H1 (cell line): ENCODE measurements at regions of chr19 and their contacts with region 1.

Region 1: DNA sequence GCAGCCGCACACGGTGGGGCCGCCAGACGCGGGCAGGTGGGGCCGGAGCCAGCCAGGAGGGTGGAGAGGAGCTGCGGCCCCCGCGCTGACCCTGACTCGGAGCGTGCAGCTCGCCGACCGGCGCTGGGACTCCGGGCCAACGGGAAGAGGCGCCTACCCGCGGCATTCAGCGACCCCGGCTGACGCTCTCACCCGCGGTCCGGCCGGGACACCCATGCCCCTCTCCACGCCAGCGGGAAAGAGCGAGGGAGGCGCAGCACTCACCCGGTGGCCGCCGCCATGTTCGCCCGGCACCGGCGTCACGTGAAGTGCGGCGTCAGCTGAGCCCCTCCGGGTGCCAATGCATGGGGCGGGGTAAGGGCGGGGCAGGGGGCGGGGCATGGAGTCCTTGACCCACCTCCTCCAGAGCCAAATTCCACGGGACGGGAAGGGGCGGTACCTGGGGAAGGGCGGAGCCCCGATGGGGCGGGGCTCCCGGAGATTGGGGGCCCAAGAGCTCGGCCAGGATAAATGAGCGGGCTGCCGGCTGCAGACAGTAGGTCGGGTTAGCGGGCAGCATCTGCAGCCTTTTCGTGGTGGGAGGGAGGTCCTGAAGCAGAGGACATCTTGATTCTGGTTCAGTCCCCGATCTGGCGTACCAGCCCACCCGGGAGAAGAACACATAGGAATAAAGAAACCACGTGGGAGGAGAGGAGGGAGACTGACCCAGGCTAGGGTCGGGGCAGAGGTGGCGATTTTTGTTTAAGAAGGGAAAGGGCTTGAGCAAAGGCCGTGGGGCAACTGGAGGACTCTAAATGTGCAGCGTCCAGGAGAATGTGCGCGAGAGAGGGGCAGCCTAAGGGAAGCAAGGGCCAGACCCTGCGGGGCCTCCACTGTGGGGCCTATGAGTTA is at the start of gene PEPD:
- DNase-seq: peak; percentile 85 to 95
- H3K4me3 ChIP-seq: peak within 1 kb of the TSS; percentile 81 to 94 (median 92)
- H3K27ac ChIP-seq: peak within 1 kb of the TSS; percentile 71; the same call in 1 of the 2 replicates
- H3K4me1 ChIP-seq: peaks cover 0 to 19% (median 5%) of the 10 kb centered on the region in 4 experiments; a peak in 5 of 7 replicates
- H3K27me3 ChIP-seq: no peaks in the 10 kb centered on the region
- CTCF ChIP-seq: no peak
- EP300 ChIP-seq: peak in 1 of 2 experiments; percentile 52; a peak in 1 of 3 replicates
- POLR2A ChIP-seq: peak in 1 of 2 experiments; percentile 76; a peak in 1 of 3 replicates
- RAD21 ChIP-seq: peak; percentile 12 to 16; a peak in 1 of 4 replicates
- total RNA-seq, gene PEPD: 84.1 and 86.4 TPM in 2 replicates

Region 2: GRCh38 chr19:33510795-33511194 is 10.9 kb before region 1 on chr19:
- CTCF ChIA-PET with region 1: interaction called, 4 read pairs
- POLR2A ChIA-PET with region 1: interaction called, 14 read pairs
- DNase-seq: no peak
- H3K4me3 ChIP-seq: no peak overlapping the region
- H3K27ac ChIP-seq: peak overlapping the region; percentile 49; the same call in 1 of the 2 replicates
- H3K4me1 ChIP-seq: peaks cover 0 to 15% (median 7%) of the 10 kb centered on the region in 4 experiments; a peak in 6 of 7 replicates
- H3K27me3 ChIP-seq: no peaks in the 10 kb centered on the region; a peak in 1 of 7 replicates
- CTCF ChIP-seq: no peak
- EP300 ChIP-seq: no peak
- POLR2A ChIP-seq: no peak
- RAD21 ChIP-seq: no peak

Region 3: GRCh38 chr19:33535226-33535625 is 13.5 kb after region 1 on chr19:
- CTCF ChIA-PET with region 1: interaction called, 7 read pairs
- POLR2A ChIA-PET with region 1: interaction called, 26 read pairs
- DNase-seq: no peak
- H3K4me3 ChIP-seq: no peak overlapping the region
- H3K27ac ChIP-seq: no peak overlapping the region
- H3K4me1 ChIP-seq: peaks cover 0 to 15% (median 7%) of the 10 kb centered on the region in 4 experiments; a peak in 5 of 7 replicates
- H3K27me3 ChIP-seq: no peaks in the 10 kb centered on the region
- CTCF ChIP-seq: no peak
- EP300 ChIP-seq: no peak
- POLR2A ChIP-seq: no peak
- RAD21 ChIP-seq: no peak

Region 4: DNA sequence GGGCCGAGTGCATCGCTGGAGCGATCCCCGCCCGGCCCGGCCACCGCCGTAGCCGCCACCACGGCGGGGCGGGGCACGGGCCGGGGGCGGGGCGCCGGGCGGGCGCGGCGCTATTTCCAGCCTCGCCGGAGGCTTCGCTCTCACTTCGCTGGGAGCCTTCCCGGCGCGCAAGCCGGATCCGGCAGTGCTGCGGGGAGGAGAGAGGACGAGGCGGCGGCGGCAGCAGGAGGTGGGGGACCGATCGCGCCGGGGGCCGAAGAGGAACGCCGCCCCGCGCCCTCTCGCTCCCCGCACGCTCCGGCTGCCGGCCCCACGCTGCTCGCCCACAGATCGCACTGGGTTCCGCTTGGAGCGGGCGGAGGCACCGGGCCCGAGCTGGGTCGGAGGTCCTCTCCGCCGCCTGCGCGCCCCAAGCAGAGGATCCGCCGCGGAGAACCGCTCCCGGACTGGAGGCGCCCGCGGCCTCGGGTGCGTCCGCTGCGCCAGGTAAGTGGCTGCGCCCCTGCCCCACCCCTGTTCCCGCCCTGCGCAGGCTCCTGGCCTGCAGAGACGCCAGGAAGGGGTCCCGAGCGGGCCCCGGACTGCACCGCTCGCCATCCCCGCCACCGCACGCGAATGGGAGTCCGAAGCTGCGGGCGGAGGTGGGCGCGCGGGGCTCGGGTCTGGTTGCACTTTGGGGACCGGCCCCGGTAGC is 100.2 kb after region 1 on chr19 and contains the start of gene CHST8:
- CTCF ChIA-PET with region 1: no interaction called
- POLR2A ChIA-PET with region 1: interaction called, 19 read pairs
- DNase-seq: peak in 1 of 2 experiments; percentile 86
- H3K4me3 ChIP-seq: peak within 1 kb of the TSS; percentile 49 to 80 (median 62)
- H3K27ac ChIP-seq: no peak within 1 kb of the TSS
- H3K4me1 ChIP-seq: peaks cover 5 to 13% (median 9%) of the 10 kb centered on the region in 4 experiments
- H3K27me3 ChIP-seq: peaks cover 15 to 59% (median 45%) of the 10 kb centered on the region in 4 experiments
- CTCF ChIP-seq: no peak
- EP300 ChIP-seq: no peak
- POLR2A ChIP-seq: peak in 1 of 2 experiments; percentile 97; a peak in 2 of 3 replicates
- RAD21 ChIP-seq: peak in 1 of 2 experiments; percentile 12; a peak in 1 of 4 replicates
- total RNA-seq, gene CHST8: 9.9 and 10.8 TPM in 2 replicates